Gastrocnemius medialis (tissue), 4 donors: ENCODE measurements at regions of chr18 and their contacts with region 1.

Region 1: DNA sequence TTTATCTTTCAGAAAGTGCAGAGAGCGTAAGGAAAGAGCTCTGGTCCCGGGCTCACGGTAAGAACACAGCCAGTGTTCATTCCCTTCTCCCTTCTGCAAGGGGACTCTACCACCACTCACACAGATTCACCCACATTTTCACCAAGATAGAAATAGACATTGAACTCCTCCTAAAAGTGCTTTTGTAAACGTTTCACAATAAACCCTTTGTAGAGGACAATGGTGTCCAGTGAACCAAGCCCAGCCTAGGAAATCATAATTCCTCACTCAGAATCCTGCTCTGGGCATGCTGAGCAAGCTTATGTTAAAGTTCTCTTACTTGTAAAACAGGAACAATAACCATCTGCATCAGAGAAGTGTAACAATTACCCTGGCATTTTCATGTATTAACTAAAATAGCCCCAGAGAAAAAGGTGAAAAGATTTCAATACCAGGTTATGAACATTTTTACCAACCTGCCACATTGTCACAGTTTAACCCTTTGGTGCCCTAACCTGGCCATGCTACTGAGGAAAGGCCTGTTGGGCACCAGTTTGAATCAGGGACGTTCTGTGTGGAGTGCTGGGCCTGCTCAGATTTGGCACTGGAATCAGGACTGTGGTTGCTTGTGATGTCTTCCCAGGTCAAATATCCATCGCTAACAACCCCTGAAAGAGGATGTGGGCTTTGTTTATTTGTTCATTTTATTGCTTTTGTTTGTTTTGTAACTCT is 22.5 kb upstream of the NDUFV2 start:
- DNase-seq: no peak
- ATAC-seq: no peak
- H3K4me3 ChIP-seq: no peak overlapping the region
- H3K27ac ChIP-seq: no peak overlapping the region
- H3K4me1 ChIP-seq: no peaks in the 10 kb centered on the region
- H3K27me3 ChIP-seq: no peaks in the 10 kb centered on the region
- CTCF ChIP-seq: no peak
- POLR2A ChIP-seq: no peak

Region 2: GRCh38 chr18:8930990-8931648 is 148.9 kb before region 1 on chr18:
- in situ Hi-C with region 1: no loop called
- intact Hi-C with region 1: no loop called
- DNase-seq: no peak
- ATAC-seq: no peak
- H3K4me3 ChIP-seq: no peak overlapping the region
- H3K27ac ChIP-seq: no peak overlapping the region
- H3K4me1 ChIP-seq: no peaks in the 10 kb centered on the region
- H3K27me3 ChIP-seq: no peaks in the 10 kb centered on the region
- CTCF ChIP-seq: no peak
- POLR2A ChIP-seq: no peak

Region 3: DNA sequence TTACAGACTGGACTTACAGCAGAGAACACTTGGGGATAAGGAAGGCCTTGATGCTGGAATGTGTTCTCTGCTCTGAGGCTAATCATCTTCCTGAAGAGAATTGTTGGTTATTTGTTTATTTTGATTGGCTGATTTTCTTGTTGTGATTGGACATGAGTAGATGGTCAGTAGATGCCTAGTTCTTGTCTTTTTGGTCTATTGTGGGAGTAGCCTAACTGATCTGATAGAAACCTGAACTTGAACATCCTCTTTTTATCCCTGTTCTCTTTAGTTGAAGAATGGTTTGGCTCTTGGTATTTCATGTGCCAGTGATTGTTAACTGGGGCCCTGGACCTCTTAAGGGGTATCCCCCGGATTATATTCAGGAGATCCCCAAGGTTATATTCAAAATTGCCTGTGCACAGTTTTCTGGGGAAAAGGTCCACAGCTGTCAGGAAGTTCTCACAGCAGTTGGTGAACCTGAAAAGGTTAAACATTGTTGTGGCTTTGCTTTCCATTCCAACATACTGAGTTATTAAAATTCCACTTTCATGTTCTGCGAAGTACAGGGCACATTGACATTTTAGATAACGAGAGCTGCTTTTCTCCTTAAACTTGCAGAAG is 268.2 kb after region 1 on chr18:
- in situ Hi-C with region 1: loop called in 2 of 4 experiments (anchors 10 kb)
- intact Hi-C with region 1: no loop called
- DNase-seq: no peak
- ATAC-seq: no peak
- H3K4me3 ChIP-seq: no peak overlapping the region
- H3K27ac ChIP-seq: no peak overlapping the region
- H3K4me1 ChIP-seq: no peaks in the 10 kb centered on the region
- H3K27me3 ChIP-seq: no peaks in the 10 kb centered on the region
- CTCF ChIP-seq: no peak
- POLR2A ChIP-seq: no peak

Region 4: DNA sequence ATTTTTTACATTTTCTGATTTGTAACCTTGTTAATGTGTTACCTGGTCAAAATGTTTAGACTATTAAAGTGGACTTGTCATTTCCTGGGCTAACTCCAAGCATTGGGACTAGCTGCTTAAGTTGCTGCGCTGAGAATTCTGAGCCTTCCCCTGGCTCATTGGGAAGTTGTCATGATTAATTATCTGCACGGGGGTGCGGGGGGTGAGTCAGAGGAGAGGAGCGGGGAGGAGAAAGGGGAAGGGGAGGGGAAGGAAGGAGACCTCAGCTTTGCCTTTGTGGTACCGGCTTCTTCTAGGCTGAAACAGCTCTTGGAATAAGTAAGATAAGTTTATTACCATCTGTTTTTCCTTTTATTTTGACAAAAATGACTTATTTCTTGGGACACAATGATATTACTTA is 1321.5 kb after region 1 on chr18:
- in situ Hi-C with region 1: no loop called
- intact Hi-C with region 1: no loop called
- DNase-seq: no peak
- ATAC-seq: no peak
- H3K4me3 ChIP-seq: no peak overlapping the region
- H3K27ac ChIP-seq: no peak overlapping the region
- H3K4me1 ChIP-seq: no peaks in the 10 kb centered on the region
- H3K27me3 ChIP-seq: no peaks in the 10 kb centered on the region
- CTCF ChIP-seq: no peak
- POLR2A ChIP-seq: no peak